B cell (primary cell): ENCODE measurements at regions of chr7 and their contacts with region 1.

Region 1: DNA sequence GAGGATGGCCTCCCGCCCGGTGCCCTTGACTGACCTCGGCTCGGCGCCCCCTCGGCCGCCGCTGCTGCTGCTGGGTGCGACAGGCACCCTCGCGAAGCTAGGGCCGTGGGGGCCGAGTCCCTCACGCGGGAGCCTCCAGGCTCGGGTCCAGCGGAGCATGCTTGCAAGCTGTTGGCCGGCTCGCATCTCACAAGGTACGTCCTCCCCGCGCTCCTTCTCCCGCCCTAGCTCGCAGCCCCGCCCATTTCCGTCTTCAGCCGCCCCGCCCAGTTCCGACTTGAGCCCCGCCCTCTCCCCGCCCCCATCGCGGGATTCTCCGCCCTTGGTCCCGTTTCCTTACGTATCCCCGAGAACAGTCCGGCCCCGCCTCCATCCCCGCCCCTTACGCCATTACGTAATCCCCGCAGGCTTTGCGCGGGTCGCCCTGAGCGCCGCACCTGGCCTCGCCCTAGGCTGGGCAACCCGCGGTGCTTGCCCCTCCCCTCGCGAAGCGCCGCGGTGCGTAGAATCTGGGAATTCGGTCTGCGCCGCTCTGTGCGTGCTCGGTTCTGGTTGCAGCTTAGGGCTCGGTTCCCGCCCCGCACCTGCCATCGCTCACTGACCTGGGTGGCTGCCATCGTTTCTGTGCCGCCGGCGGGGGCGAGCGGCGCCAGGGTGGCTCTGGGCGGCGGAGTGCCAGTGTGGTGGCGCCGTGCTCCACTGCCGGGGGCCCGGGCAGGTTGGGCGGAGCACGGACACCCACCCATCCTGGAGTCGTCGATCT is at the start of gene ABHD11:
- DNase-seq: peak; percentile 99
- ATAC-seq: peak; percentile 89
- H3K4me3 ChIP-seq: peak within 1 kb of the TSS; percentile 61 to 94 (median 91)
- H3K4me3 Mint-ChIP-seq: peak within 1 kb of the TSS; percentile 91
- H3K27ac ChIP-seq: peak within 1 kb of the TSS; percentile 79 to 93
- H3K27ac Mint-ChIP-seq: peak within 1 kb of the TSS; percentile 89
- H3K4me1 ChIP-seq: peaks cover 4 to 18% of the 10 kb centered on the region in 2 donors
- H3K4me1 Mint-ChIP-seq: peaks cover 11% of the 10 kb centered on the region
- H3K27me3 ChIP-seq: peaks cover 0 to 4% (median 0%) of the 10 kb centered on the region in 4 experiments
- H3K27me3 Mint-ChIP-seq: no peaks in the 10 kb centered on the region
- CTCF ChIP-seq: no peak
- total RNA-seq, gene ABHD11: 23.2 and 27.7 TPM in 2 replicates

Region 2: DNA sequence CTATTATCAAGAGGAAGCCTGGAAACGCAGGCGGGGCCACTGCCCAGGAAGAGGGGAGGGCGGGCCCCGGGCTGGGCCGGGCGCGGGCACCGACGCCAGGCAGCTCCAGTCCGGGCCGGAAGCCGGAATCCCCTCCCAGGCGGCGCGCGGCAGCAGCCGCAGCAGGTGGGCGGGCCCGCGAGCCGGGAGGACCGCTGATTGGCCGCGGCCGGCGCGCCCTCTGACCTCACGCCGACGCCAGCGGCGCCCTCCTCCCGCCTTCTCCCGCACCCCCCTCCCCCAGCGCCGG is 181.7 kb before region 1 on chr7:
- CTCF ChIA-PET with region 1: no interaction called
- POLR2A ChIA-PET with region 1: interaction called, 5 read pairs
- intact Hi-C with region 1: loop called (anchors 1 kb)
- DNase-seq: no peak
- ATAC-seq: peak; percentile 89
- H3K4me3 ChIP-seq: peak overlapping the region; percentile 69 to 86 (median 82)
- H3K4me3 Mint-ChIP-seq: peak overlapping the region; percentile 92
- H3K27ac ChIP-seq: peak overlapping the region; percentile 92 to 99
- H3K27ac Mint-ChIP-seq: peak overlapping the region; percentile 93
- H3K4me1 ChIP-seq: peaks cover 14 to 21% of the 10 kb centered on the region in 2 donors
- H3K4me1 Mint-ChIP-seq: peaks cover 30% of the 10 kb centered on the region
- H3K27me3 ChIP-seq: no peaks in the 10 kb centered on the region
- H3K27me3 Mint-ChIP-seq: no peaks in the 10 kb centered on the region
- CTCF ChIP-seq: no peak

Region 3: GRCh38 chr7:73606801-73607691 is 131.7 kb before region 1 on chr7:
- CTCF ChIA-PET with region 1: interaction called, 78 read pairs
- POLR2A ChIA-PET with region 1: no interaction called
- intact Hi-C with region 1: loop called (anchors 2 kb)
- DNase-seq: peak; percentile 80
- ATAC-seq: peak; percentile 83
- H3K4me3 ChIP-seq: no peak overlapping the region
- H3K4me3 Mint-ChIP-seq: no peak overlapping the region
- H3K27ac ChIP-seq: no peak overlapping the region
- H3K27ac Mint-ChIP-seq: no peak overlapping the region
- H3K4me1 ChIP-seq: peaks cover 8% of the 10 kb centered on the region in 2 donors
- H3K4me1 Mint-ChIP-seq: no peaks in the 10 kb centered on the region
- H3K27me3 ChIP-seq: peaks cover 0 to 23% (median 6%) of the 10 kb centered on the region in 4 experiments
- H3K27me3 Mint-ChIP-seq: peaks cover 28% of the 10 kb centered on the region
- CTCF ChIP-seq: peak; percentile 97

Region 4: DNA sequence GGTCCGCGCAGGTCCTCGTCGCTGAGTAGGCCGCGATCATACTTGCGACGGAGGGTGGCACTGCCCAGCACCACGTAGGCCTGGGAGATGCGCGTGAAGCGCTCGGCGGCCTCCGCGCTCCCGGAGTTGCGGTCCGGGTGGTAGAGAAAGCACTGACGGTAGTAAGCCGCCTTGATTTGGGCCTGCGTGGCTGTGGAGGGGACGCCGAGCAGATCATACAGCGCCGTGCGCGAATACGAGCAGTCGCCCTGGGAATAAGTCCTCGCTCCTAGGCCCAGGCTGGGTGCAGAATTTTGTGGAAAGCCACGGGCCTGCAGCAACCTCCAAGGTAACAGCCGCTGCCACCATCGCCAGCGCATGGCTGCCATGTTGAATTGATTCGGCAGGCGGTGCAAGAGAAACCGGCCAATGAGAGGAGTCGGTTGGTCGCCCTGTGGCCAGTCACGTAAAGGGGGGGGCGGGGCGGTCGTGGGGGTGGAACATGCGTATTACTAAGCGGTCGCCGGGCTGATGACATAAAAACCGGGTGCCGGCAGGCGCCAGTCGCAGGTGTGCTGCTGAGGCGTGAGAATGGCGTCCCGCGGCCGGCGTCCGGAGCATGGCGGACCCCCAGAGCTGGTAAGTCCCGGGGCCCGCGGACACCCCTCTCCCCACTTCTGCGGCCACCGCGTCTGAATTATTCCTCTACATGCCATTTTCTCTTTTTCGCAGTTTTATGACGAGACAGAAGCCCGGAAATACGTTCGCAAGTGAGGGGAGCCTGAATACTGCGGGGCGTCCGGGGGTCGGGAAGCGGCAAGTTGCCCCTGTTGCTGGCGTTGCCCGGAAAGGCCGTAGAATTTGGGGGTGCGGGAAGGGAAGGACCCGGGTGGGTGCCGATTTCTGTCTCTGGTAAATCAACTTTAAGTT is 55.5 kb before region 1 on chr7 and contains the starts of genes BUD23 and DNAJC30:
- CTCF ChIA-PET with region 1: no interaction called
- POLR2A ChIA-PET with region 1: no interaction called
- intact Hi-C with region 1: loop called (anchors 1 kb)
- DNase-seq: peak; percentile 96
- ATAC-seq: peak; percentile 97
- H3K4me3 ChIP-seq: peak within 1 kb of the TSS; percentile 79 to 99 (median 95)
- H3K4me3 Mint-ChIP-seq: peak within 1 kb of the TSS; percentile 97
- H3K27ac ChIP-seq: peak within 1 kb of the TSS; percentile 81 to 90
- H3K27ac Mint-ChIP-seq: peak within 1 kb of the TSS; percentile 96
- H3K4me1 ChIP-seq: peaks cover 19 to 25% of the 10 kb centered on the region in 2 donors
- H3K4me1 Mint-ChIP-seq: peaks cover 32% of the 10 kb centered on the region
- H3K27me3 ChIP-seq: no peaks in the 10 kb centered on the region
- H3K27me3 Mint-ChIP-seq: no peaks in the 10 kb centered on the region
- CTCF ChIP-seq: no peak
- total RNA-seq, gene BUD23: 55.9 and 63.9 TPM in 2 replicates
- total RNA-seq, gene DNAJC30: 15.5 and 17.5 TPM in 2 replicates

Region 5: DNA sequence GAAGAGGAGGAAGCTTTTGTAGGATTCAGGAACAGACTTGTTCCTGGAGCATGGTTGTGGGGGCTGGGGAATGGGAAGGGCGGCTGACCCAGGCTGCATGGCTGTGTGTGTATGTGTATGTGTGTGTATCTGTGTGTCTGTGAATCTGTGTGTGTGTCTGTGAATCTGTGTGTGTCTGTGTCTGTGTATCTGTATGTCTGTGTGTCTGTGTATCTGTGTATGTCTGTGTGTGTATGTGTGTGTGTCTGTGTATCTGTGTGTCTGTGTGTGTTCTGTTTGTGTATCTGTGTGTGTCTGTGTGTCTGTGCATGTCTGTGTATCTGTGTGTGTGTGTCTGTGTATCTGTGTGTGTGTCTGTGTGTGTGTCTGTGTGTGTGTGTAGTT is 12.7 kb before region 1 on chr7:
- CTCF ChIA-PET with region 1: interaction called, 12 read pairs
- POLR2A ChIA-PET with region 1: interaction called, 4 read pairs
- intact Hi-C with region 1: no loop called
- DNase-seq: no peak
- ATAC-seq: no peak
- H3K4me3 ChIP-seq: no peak overlapping the region
- H3K4me3 Mint-ChIP-seq: no peak overlapping the region
- H3K27ac ChIP-seq: no peak overlapping the region
- H3K27ac Mint-ChIP-seq: no peak overlapping the region
- H3K4me1 ChIP-seq: peaks cover 0 to 2% of the 10 kb centered on the region in 2 donors
- H3K4me1 Mint-ChIP-seq: no peaks in the 10 kb centered on the region
- H3K27me3 ChIP-seq: peaks cover 0 to 27% (median 11%) of the 10 kb centered on the region in 4 experiments
- H3K27me3 Mint-ChIP-seq: peaks cover 14% of the 10 kb centered on the region
- CTCF ChIP-seq: peak; percentile 38

Region 6: GRCh38 chr7:73851410-73852234 is 112.8 kb after region 1 on chr7:
- CTCF ChIA-PET with region 1: interaction called, 13 read pairs
- POLR2A ChIA-PET with region 1: no interaction called
- intact Hi-C with region 1: loop called (anchors 1 kb)
- DNase-seq: no peak
- ATAC-seq: peak; percentile 41
- H3K4me3 ChIP-seq: no peak overlapping the region
- H3K4me3 Mint-ChIP-seq: no peak overlapping the region
- H3K27ac ChIP-seq: no peak overlapping the region
- H3K27ac Mint-ChIP-seq: no peak overlapping the region
- H3K4me1 ChIP-seq: peaks cover 3 to 10% of the 10 kb centered on the region in 2 donors
- H3K4me1 Mint-ChIP-seq: peaks cover 13% of the 10 kb centered on the region
- H3K27me3 ChIP-seq: peaks cover 0 to 16% (median 3%) of the 10 kb centered on the region in 4 experiments
- H3K27me3 Mint-ChIP-seq: peaks cover 29% of the 10 kb centered on the region
- CTCF ChIP-seq: no peak

Region 7: DNA sequence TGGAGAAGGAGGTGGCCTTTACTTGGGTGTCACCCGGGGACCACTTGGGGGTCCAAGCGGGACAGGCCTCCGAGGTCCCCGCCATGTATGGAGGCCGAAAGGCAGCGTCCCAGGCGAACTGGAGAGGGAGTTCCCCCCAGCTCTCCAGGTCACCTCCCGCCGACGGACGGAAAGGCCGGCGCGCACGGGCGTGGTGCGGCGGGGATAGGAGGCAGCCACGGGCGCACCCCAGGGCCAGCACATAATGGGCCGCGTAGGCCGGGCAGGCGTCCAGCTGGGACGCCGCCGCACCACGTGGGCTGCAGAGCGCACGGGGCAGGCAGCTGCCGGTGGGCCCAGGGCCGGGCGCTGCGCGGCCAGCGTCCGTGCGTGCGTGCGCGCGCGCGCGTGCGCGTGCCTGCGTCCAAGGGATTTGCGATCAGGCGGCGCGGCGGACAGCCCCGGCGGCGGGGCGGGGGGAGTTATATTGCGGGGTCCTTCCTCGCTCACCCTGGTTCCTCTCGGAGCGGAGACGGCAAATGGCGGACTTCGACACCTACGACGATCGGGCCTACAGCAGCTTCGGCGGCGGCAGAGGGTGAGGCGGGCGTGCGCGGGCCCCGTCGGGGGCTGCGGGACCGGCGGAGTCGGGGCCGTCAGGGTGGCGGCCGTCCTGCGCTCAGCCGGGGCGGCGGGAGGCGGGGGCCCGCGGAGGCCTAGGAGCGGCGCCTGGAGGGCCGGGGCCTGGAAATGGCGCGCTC is 435.2 kb after region 1 on chr7 and contains the start of gene EIF4H:
- CTCF ChIA-PET with region 1: no interaction called
- POLR2A ChIA-PET with region 1: no interaction called
- intact Hi-C with region 1: loop called (anchors 5 kb)
- DNase-seq: peak; percentile 98
- ATAC-seq: peak; percentile 84
- H3K4me3 ChIP-seq: peak within 1 kb of the TSS; percentile 67 to 93 (median 84)
- H3K4me3 Mint-ChIP-seq: peak within 1 kb of the TSS; percentile 95
- H3K27ac ChIP-seq: peak within 1 kb of the TSS; percentile 88 to 94
- H3K27ac Mint-ChIP-seq: peak within 1 kb of the TSS; percentile 98
- H3K4me1 ChIP-seq: peaks cover 44 to 52% of the 10 kb centered on the region in 2 donors
- H3K4me1 Mint-ChIP-seq: peaks cover 42% of the 10 kb centered on the region
- H3K27me3 ChIP-seq: no peaks in the 10 kb centered on the region
- H3K27me3 Mint-ChIP-seq: no peaks in the 10 kb centered on the region
- CTCF ChIP-seq: no peak
- total RNA-seq, gene EIF4H: 180 and 199 TPM in 2 replicates